ENCODE measurements at regions of chr17 and their contacts with region 1.

Region 1: GRCh38 chr17:68491381-68492231 is 20.6 kb upstream of the PRKAR1A start:
- DNase-seq: peak; percentile 73
- ATAC-seq: peak; percentile 38

Region 2: GRCh38 chr17:68437979-68438822 is 53.4 kb before region 1 on chr17:
- intact Hi-C with region 1: loop called (anchors 2 kb)
- DNase-seq: peak; percentile 52
- ATAC-seq: peak; percentile 63

Measured in sciatic nerve (tissue), 2 donors.